ENCODE measurements at regions of chr19 and their contacts with region 1.

Region 1: DNA sequence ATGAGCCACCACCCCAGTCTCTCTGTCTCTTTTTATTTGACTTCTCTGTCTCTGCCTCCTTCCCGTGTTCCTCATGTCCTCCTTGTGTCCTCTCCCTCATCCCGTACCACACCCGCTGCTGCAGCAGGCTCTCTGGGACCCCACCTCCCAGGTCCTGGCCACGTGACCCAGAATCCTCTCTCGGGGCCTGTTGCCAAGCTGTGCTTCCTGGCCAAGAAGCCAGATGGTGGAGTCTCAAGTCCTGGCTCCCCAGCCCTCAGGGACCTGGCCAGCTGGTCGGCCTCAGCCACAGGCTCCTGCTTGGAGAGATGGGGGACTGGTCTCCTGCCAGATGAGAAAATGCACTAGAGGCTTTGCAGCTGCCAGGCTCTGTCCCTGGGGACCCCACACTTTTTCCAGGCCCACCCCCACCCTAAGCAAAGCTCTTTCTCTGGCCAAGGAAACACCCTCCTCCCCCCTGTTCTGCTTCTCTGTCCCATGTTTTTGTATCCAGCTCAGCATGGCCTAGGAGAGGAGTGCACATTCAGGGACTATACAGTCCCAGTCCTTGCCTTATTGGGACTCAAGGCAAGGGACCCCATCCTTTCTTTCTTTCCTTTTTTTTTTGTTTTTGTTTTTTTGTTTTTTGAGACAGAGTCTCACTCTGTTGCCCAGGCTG is 34.3 kb upstream of the SHKBP1 start:
- DNase-seq: no peak
- H3K4me3 ChIP-seq: no peak overlapping the region
- H3K27ac ChIP-seq: no peak overlapping the region
- H3K4me1 ChIP-seq: no peaks in the 10 kb centered on the region
- H3K27me3 ChIP-seq: no peaks in the 10 kb centered on the region
- CTCF ChIP-seq: no peak
- EP300 ChIP-seq: no peak
- POLR2A ChIP-seq: no peak
- RAD21 ChIP-seq: no peak

Region 2: DNA sequence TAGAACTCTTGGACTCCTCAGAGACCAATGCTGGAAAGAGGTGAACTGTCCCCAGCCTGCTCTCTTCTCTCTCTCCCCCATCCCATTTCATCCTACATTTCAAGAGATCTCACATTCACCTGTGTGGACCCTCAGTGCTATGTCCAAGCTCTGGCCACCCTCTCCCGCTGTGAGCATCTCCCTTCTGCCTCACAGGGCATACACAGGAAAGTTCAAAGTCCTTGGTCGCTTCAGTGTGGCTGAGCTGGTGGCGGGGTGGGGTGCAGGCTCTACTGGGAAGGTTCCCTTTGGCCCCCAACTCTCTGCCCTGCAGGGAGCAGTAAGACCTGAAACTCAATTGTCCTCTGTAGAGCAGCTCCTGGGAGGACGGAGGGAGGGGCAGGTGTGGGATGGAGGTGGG is 48.6 kb before region 1 on chr19:
- CTCF ChIA-PET with region 1: no interaction called
- POLR2A ChIA-PET with region 1: no interaction called
- DNase-seq: no peak
- H3K4me3 ChIP-seq: no peak overlapping the region
- H3K27ac ChIP-seq: no peak overlapping the region
- H3K4me1 ChIP-seq: no peaks in the 10 kb centered on the region
- H3K27me3 ChIP-seq: peaks cover 0 to 5% (median 1%) of the 10 kb centered on the region in 4 experiments; a peak in 3 of 7 replicates
- CTCF ChIP-seq: no peak
- EP300 ChIP-seq: no peak
- POLR2A ChIP-seq: no peak
- RAD21 ChIP-seq: no peak

Region 3: GRCh38 chr19:40523322-40524047 is 18.8 kb before region 1 on chr19:
- CTCF ChIA-PET with region 1: interaction called, 15 read pairs
- POLR2A ChIA-PET with region 1: no interaction called
- DNase-seq: peak in 1 of 2 experiments; percentile 87
- H3K4me3 ChIP-seq: no peak overlapping the region
- H3K27ac ChIP-seq: no peak overlapping the region
- H3K4me1 ChIP-seq: peaks cover 0 to 4% (median 1%) of the 10 kb centered on the region in 4 experiments; a peak in 3 of 7 replicates
- H3K27me3 ChIP-seq: peaks cover 17 to 32% (median 27%) of the 10 kb centered on the region in 4 experiments
- CTCF ChIP-seq: peak; percentile 91 to 99 (median 98)
- EP300 ChIP-seq: no peak
- POLR2A ChIP-seq: no peak
- RAD21 ChIP-seq: peak; percentile 67 to 78

Region 4: DNA sequence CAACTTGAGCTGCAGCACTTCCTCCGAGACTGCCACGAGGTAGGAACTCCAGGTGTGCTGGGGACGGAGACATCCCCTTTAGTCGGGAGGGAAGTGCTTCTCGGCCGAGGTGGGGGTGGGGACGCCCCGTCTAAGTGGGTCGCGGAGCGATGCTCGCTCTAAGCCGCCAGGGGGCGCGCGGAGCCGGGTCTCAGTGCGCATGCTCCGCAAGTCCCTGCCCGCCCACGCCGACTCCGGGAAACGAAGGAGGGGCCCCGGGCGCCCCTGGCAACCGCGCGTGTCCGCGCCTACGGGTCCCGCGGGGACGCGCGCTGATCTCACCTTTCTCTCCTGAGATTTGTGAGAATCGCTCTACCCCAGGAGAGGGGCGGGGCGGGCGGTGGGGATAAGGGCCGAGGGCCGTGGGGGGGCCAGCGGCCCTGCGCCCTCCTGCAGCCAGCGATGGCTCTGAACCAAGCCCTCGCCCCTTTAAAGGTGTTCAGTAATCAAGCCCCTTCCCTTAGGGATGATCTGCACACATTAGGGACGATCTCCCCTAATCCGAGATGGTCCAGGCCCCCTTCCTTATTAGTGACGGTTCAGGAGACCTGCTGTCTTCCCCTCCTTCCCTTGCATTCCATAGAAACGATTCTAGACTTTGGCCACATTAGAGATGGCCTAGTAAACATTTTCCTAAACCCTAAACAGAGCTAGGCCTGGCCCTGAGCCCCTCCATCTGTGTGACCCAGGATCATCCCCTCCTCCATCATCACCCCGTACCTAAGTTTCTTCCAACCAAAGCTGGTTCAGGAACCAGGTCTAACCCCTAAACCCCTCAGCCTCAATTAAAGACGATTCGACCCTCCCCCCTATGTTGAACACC is 13.0 kb before region 1 on chr19:
- CTCF ChIA-PET with region 1: interaction called, 95 read pairs
- POLR2A ChIA-PET with region 1: interaction called, 3 read pairs
- DNase-seq: peak; percentile 80 to 96
- H3K4me3 ChIP-seq: peak overlapping the region; percentile 24 to 62 (median 44); a peak in 7 of 8 replicates
- H3K27ac ChIP-seq: no peak overlapping the region
- H3K4me1 ChIP-seq: peaks cover 0 to 7% (median 4%) of the 10 kb centered on the region in 4 experiments; a peak in 6 of 7 replicates
- H3K27me3 ChIP-seq: peaks cover 0 to 4% (median 0%) of the 10 kb centered on the region in 4 experiments; a peak in 2 of 7 replicates
- CTCF ChIP-seq: peak; percentile 87 to 96 (median 93)
- EP300 ChIP-seq: no peak
- POLR2A ChIP-seq: no peak
- RAD21 ChIP-seq: peak; percentile 35 to 39; a peak in 2 of 4 replicates

Region 5: DNA sequence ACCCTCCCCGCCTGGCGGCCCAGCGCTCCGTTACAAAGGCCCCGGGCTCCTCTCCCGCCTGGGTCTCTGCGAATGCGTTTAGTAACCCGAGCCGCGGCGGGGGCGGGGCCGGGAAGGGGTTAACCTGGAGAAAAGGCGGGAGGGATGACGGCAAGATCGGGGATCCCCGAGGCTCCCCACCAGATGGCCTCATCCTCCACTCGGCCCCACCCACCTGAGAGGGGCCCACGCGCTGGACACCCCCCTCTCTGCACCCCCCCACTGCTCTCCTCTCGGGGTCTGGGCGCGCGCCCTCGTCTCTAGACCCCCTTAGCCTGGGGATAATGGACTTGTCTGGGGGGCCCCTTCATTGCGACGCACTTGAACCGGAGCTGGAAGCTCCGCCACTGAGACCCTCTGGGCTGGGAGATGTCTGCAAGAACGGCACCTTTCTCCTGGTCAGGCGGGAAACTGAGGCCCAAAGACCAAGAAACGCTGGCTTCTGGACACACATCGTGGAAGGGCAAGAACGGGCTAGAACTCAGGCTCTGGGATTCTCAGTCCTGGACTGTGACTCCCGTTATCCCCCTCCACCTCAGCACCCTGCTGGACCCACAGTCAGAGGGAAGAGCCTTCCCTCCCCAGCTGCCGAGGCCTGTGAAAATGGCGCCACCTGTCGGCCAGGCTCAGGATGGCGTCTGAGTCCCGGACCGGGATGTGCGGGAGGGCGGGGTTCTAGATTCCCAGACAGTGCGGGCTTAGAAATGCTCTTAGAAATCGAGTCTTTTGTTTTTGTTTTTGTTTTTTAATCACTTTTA is 56.0 kb after region 1 on chr19:
- CTCF ChIA-PET with region 1: interaction called, 21 read pairs
- POLR2A ChIA-PET with region 1: interaction called, 3 read pairs
- DNase-seq: peak in 1 of 2 experiments; percentile 97
- H3K4me3 ChIP-seq: peak overlapping the region; percentile 38 to 69 (median 64)
- H3K27ac ChIP-seq: peak overlapping the region; percentile 78
- H3K4me1 ChIP-seq: peaks cover 9 to 33% (median 21%) of the 10 kb centered on the region in 4 experiments
- H3K27me3 ChIP-seq: peaks cover 19 to 47% (median 42%) of the 10 kb centered on the region in 4 experiments
- CTCF ChIP-seq: peak; percentile 95 to 98 (median 97)
- EP300 ChIP-seq: peak in 1 of 2 experiments; percentile 97; a peak in 2 of 3 replicates
- POLR2A ChIP-seq: peak in 1 of 2 experiments; percentile 47; a peak in 1 of 3 replicates
- RAD21 ChIP-seq: peak; percentile 81 to 89

Region 6: DNA sequence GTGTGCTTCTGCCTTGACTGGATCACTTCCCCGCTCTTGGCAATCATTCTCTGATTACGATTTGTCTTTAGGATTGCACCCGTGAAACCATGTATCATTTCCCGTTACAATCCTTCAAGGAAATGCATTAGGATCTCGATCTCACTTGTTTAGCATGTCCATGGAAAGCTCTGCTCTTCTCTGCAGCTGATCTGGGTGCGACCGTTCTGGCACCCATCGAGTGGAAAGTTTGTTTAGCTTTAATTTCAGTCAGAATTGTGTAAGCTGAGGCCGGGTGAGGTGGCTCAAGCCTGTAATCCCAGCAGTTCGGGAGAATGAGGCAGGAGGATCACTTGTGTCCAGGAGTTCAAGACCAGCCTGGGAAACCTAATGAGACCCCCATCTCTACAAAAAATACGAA is 117.2 kb after region 1 on chr19:
- CTCF ChIA-PET with region 1: no interaction called
- POLR2A ChIA-PET with region 1: no interaction called
- DNase-seq: no peak
- H3K4me3 ChIP-seq: no peak overlapping the region
- H3K27ac ChIP-seq: no peak overlapping the region
- H3K4me1 ChIP-seq: peaks cover 0 to 4% (median 3%) of the 10 kb centered on the region in 4 experiments; a peak in 5 of 7 replicates
- H3K27me3 ChIP-seq: no peaks in the 10 kb centered on the region
- CTCF ChIP-seq: no peak
- EP300 ChIP-seq: no peak
- POLR2A ChIP-seq: no peak
- RAD21 ChIP-seq: no peak